ENCODE measurements at regions of chr1 and their contacts with region 1.

Region 1: GRCh38 chr1:201970334-201971159 is 11.9 kb upstream of the RNPEP start:
- DNase-seq: no peak
- CTCF ChIP-seq: no peak

Region 2: DNA sequence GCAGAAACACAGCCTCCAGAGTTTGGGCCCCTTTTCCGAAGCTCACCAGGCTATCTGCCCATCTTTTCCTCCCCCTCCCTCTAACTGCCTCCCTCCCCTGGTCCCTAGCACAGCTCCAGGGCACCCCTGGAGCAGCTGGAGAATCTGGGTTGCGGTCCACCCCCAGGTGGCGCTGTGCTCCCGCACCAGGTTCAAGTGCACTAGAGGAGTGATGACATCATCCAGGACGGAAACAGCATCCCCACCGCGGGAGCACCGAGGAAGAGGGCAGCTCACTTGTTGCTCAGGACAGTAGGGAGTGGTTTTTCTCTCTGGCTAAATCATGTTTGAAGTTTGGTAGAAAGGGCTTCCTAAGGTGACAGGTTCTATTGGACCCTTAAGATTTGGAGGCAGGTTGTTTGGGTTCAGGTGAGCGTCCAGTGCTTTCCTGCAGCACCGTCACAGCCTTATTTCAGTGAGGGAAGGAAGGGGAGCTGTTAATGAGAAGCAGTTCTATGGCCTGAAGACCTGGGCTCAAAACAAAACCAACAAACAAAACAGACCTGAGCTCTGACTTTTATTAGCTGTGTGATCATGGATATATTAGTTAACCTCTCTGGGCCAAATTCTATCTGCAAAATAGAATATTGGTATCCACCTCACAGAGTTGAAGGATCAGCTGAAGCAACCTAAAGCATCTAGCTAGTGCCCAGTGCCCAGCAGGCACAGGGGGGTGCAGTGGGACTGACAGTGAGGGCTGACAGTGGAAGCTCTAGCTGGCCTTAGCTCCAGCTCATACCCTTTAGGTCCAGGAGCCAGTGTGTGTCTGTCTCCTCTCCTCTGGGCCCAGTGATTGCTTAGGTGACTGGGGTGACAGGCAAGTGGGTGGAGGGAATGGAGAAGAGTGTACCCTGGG is 74.4 kb before region 1 on chr1:
- in situ Hi-C with region 1: loop called (anchors 5 kb)
- DNase-seq: peak; percentile 91
- CTCF ChIP-seq: peak; percentile 89

Region 3: DNA sequence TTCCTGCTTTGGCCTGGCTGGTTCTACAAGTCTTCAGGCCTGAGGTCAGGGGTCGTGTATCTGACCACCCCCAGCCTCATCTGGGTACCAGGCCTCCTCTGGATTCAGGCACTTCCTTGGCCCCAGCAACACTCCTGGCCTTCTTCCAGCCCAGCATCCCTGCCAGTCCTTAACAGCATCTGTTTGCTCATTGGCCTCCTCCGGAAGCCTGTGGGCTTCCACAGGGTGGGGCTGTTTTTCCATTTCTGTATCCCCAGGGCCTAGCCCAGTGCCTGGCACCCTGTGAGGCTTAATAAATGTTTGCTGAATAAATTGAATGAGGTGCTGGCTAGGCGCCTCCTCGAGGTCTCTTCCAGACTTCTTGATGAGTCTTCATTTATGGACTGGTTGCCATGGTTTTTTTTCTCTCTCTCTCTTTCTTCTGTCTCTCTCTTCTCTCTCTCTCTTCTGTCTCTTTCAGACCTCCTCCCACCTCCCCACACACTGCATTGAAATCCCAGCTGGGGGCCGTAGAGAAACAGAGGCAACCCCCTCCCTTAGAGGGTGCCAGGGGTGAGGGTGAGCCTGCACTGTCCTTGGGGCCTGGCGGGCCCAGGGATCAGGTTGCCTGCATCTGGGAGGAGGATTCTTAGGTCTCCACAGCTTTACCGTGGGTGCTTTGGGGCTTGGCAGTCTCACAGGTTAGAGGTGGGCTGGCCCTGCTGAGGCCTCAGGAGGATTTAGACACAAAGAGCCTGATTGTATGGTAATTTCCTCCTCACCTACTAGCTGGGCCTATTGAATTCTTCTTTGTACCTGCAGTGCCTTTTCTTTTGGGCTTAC is 130.8 kb after region 1 on chr1:
- in situ Hi-C with region 1: no loop called
- DNase-seq: no peak
- CTCF ChIP-seq: no peak

Region 4: DNA sequence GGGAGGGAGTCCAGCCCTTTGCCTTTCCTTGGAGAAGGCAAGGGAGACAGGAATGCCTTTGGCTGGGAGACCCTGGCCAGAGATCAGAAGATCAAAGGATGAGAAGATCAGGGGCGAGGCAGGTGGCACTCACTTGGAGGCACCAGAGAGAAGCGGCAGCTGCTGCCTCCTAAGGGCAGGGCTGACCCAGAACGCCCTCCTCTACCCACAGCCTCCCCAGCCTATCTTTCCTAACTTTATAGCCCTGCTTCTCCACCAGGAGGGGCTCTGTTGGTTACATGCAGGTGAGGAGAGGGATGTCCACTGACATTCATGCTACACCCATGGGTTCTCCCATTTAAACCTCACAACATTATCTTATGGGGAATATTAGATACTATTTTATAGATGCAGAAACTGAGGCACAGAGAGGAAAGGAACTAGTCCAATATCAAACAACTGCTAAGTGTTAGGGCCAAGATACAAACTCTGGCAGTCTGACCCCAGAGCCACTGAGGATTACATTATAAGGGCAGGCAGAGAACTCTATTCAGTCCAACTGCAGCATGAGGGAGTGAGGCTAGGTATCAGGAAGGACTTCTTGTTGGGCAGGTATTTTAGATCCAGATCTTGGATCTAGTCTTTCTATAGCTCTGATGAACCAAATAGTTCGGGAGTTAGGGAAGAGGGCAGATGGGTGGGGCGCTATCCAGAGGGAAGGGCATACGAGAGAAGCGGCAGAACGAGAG is 243.0 kb after region 1 on chr1:
- in situ Hi-C with region 1: no loop called
- DNase-seq: no peak
- CTCF ChIP-seq: no peak

Measured in GM13976 (cell line).